HEK293 (cell line): ENCODE measurements at regions of chr1 and their contacts with region 1.

Region 1: DNA sequence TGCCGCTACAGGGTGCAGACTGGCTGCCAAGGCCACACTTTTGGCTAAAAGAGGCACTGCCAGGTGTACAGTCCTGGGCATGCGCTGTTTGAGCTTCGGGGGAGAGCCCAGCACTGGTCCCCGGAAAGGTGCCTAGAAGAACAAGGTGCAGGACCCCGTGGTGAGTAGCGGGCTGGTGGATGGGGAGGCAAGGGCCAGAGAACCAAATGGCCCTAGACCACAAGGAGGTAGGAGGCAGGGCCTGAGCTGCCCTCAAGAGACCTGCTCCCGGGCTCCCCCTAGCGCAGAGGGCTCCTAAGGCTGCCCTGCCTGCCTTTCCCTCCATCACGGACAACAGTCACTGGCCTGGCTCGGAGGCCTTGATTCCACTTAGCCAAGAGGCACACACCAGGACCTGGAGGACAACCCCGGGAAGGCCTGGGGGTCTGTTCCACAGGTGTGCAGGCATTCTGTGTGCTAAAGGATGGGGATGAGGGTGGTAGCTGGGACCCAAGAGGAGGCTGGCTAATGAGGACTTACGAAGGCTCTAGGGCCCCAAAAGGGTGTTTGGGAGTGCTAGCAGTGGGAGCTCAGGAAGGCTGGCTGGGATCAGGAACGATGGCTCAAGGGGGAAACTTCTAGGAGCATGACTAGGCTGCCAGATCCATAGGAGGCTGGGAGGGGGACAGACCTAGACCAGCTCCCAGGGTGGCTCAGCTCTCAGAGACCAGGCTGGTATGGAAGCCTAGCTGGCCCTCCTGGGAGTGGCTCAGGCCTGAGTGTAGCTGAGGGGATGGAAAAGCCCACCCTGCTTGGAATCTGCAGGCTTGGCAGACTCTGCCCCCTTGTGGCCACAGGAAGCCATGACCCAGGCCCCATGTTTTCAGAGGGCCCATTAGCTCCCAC is 742 bp downstream of the ARTN start:
- H3K4me3 ChIP-seq: no peak overlapping the region
- H3K27ac ChIP-seq: peak overlapping the region; percentile 7; the same call in 1 of the 2 replicates
- H3K4me1 ChIP-seq: peaks cover 3% of the 10 kb centered on the region; the same call in 1 of the 2 replicates
- CTCF ChIP-seq: peak; percentile 75

Region 2: GRCh38 chr1:43774359-43774758 is 160.0 kb before region 1 on chr1:
- CTCF ChIA-PET with region 1: interaction called, 555 read pairs
- POLR2A ChIA-PET with region 1: interaction called, 3 read pairs
- H3K4me3 ChIP-seq: no peak overlapping the region
- H3K27ac ChIP-seq: no peak overlapping the region
- H3K4me1 ChIP-seq: no peaks in the 10 kb centered on the region
- CTCF ChIP-seq: no peak

Region 3: DNA sequence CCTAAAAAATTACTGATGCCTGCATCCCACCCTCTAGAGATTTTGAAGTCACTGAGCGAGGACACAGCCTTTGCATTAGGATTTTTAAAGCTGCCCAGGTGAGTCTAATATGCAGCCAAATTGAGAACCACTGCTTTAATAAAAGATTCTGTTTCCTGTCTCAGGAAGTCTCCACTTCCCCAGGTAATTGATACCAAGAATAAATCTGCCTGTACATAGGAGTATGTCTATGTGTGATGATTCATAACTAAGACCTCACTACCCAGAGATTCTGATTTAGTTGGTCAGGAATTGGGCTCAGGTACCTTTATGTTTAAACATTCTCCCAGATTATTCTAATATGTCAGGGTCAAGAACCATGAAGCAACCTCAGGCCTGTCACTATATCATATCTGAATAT is 109.5 kb before region 1 on chr1:
- CTCF ChIA-PET with region 1: interaction called, 11 read pairs
- POLR2A ChIA-PET with region 1: no interaction called
- H3K4me3 ChIP-seq: no peak overlapping the region
- H3K27ac ChIP-seq: no peak overlapping the region
- H3K4me1 ChIP-seq: no peaks in the 10 kb centered on the region
- CTCF ChIP-seq: no peak

Region 4: DNA sequence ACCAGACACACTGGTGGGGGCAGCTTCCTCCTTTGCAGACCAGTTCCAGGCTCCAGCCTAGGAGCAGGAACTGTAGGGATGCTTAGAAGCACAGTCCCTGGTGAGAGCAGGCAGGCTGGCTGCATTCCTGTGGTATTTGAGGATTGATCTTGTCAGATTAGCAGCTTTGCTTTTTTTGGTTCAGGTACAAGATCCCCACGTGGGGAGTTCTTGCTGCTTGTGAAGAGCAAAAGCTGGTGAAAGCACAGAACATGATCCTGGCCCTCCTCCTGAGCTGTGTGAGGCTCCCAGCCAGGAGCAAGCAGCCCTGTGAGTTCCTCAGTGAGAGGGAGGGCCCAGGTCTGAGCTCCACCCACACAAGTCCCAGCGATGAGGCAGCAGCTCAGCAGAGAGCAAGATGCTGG is 76.0 kb before region 1 on chr1:
- CTCF ChIA-PET with region 1: interaction called, 18 read pairs
- POLR2A ChIA-PET with region 1: no interaction called
- H3K4me3 ChIP-seq: no peak overlapping the region
- H3K27ac ChIP-seq: no peak overlapping the region
- H3K4me1 ChIP-seq: peaks cover 7% of the 10 kb centered on the region
- CTCF ChIP-seq: no peak

Region 5: GRCh38 chr1:43912607-43913006 is 21.7 kb before region 1 on chr1:
- CTCF ChIA-PET with region 1: interaction called, 16 read pairs
- POLR2A ChIA-PET with region 1: no interaction called
- H3K4me3 ChIP-seq: no peak overlapping the region
- H3K27ac ChIP-seq: no peak overlapping the region
- H3K4me1 ChIP-seq: no peaks in the 10 kb centered on the region
- CTCF ChIP-seq: no peak

Region 6: GRCh38 chr1:43994897-43995335 is 60.6 kb after region 1 on chr1:
- CTCF ChIA-PET with region 1: no interaction called
- POLR2A ChIA-PET with region 1: no interaction called
- H3K4me3 ChIP-seq: no peak overlapping the region
- H3K27ac ChIP-seq: no peak overlapping the region
- H3K4me1 ChIP-seq: no peaks in the 10 kb centered on the region
- CTCF ChIP-seq: peak; percentile 63

Region 7: DNA sequence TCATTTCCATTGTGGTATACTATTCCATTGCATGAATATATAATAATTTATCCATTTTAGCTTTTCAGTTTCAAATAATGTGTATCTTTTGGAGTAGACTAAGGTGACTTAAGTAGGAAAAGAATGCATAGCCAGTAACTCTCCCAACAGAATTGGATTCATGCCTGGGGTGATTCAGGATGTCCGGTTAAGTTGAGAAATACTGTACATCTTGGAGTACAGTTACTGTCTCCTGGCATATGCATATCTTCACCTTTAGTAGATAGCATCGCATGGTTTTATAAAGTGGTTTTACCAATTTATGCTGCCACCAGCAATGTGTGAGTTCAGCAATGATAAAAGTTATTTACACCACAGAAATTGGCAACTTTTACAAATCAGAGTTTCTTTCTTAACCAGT is 115.5 kb after region 1 on chr1:
- CTCF ChIA-PET with region 1: interaction called, 32 read pairs
- POLR2A ChIA-PET with region 1: no interaction called
- H3K4me3 ChIP-seq: no peak overlapping the region
- H3K27ac ChIP-seq: no peak overlapping the region
- H3K4me1 ChIP-seq: no peaks in the 10 kb centered on the region
- CTCF ChIP-seq: no peak